ENCODE measurements at regions of chr3 and their contacts with region 1.

Region 1: DNA sequence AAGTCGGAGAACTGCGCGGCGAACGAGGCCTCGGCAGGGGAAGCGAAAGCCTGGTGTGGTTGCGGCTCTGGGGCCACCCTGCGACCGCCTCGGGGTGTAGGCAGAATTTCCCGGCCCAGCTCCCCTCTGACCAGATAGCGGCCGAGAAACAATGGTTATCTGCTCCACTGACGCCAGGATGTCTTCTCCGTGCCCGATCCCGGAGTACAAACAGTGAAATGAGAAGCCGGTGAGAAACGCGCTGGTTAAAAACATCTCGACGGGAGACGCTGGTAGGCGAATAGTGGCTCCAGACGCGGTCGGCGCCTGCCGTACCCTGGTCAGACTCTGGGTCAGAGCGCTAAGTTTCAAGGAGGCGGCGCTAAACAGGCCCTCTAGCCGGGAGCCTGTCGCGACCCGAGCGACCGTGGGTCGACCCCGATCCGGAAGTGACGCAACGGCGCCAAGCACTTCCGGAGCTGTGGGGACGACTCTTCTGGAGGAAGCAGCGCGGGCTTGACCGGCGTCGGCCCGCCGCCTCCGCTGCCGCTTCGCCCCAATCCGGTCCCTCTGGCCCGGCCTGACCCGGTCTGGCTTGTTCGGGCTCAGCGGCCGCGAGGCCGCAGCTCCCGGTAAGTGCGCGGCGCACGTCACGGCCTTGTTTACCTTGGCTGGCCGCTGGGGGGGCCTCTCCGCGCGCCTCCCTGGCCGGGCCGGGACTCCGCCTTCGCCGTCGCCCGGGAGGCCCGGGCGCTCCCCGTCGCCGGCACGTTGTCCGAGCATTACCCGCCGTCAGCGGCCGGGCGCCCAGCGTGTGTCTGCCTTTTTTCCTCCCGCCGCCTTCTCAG is at the start of gene ARIH2:
- DNase-seq: peak; percentile 95
- H3K4me3 ChIP-seq: peak within 1 kb of the TSS; percentile 63 to 94 (median 84)
- H3K27ac ChIP-seq: peak within 1 kb of the TSS; percentile 99
- H3K4me1 ChIP-seq: peaks cover 14% of the 10 kb centered on the region
- H3K27me3 ChIP-seq: no peaks in the 10 kb centered on the region
- CTCF ChIP-seq: no peak
- POLR2A ChIP-seq: peak; percentile 97
- total RNA-seq, gene ARIH2: 77.2 and 85.5 TPM in 2 replicates

Region 2: DNA sequence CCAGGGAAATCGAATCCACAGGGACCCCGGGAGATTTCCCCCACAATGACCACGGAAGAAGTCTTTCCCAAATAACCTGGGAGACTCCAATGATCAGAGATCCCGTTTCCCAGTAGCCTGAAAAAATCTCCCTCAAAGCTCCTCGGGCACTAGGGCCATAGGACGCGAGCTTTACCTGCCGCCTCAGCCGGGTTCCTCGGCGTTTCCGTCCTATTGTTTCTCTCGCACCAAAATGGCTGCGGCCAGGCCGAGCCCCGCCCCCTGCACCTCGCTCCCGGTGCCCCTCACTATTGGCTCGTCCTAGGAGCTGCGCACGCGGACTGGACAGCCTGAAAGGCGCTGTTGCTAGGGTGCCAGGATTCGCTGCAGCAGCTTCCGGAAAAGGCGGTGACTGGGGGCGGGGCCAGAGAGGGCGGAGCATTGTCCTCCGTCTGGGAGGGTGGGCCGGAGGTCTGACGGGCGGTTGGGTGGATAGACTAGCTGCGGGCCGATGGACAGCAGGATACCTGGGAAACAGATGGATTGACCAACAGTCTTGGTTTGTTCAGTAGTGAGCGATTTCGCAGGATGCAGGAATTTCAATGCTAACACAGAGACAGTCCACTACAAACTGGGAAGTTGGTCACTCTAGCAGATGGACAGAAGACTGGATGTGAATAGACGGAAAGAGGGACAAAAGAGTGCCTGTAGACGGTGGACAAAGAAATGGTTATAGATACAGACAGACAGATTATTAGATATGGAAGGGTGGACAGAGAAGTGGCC is 201.4 kb before region 1 on chr3 and contains the start of gene IP6K2:
- CTCF ChIA-PET with region 1: no interaction called
- POLR2A ChIA-PET with region 1: no interaction called
- dilution Hi-C with region 1: no loop called
- intact Hi-C with region 1: loop called (anchors 5 kb)
- DNase-seq: peak; percentile 99
- H3K4me3 ChIP-seq: peak within 1 kb of the TSS; percentile 81 to 99 (median 93)
- H3K27ac ChIP-seq: peak within 1 kb of the TSS; percentile 88
- H3K4me1 ChIP-seq: peaks cover 8% of the 10 kb centered on the region
- H3K27me3 ChIP-seq: peaks cover 5 to 8% of the 10 kb centered on the region in 2 experiments
- CTCF ChIP-seq: no peak
- POLR2A ChIP-seq: peak; percentile 97
- total RNA-seq, gene IP6K2: 72.4 and 81.8 TPM in 2 replicates

Region 3: DNA sequence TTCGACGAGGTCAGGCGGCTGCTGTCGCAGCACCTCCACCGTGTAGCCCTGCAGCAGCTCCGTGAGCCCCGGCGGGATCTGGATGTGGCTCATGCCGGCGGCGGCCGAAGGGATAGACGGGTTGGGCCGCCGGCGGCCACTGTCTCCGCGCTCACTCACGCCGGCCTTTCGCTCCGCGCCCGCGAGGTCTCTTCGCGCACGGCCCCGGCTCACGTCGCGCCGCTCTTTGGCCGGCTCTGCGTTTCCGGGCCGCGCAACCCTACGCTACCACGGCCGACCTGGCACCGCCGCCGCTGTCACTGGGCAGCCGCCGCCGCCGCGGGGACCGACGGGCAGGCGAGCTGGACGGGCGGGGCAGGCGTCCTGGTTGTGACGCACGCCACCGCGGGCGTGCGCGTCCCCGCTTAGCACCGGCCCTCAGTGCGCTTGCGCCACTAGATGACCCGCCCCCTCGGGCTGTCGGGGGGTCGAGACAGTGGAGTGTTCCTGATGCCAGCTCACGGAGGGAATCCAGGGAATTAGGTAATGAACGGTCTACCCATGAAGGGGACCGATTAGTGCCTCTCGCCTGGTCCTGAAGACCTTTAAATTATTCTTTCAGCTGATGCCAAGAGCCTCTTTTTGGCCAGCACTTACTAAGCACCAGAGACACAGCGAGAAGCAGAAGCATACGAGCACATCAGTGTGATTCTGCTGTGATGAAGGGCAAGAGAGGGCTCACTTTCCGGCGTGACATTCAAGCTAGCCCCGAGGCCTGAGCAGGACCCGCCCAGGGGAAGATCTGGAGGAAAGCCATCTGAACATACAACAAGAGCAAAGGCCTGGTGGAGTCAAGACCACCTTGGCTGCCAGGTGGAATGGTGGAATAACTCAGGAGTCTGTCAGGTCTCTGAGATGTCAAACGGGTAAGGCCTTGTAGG is 70.8 kb before region 1 on chr3 and contains the start of gene PRKAR2A:
- CTCF ChIA-PET with region 1: interaction called, 3 read pairs
- POLR2A ChIA-PET with region 1: no interaction called
- dilution Hi-C with region 1: no loop called
- intact Hi-C with region 1: loop called (anchors 1 kb)
- DNase-seq: peak; percentile 92
- H3K4me3 ChIP-seq: peak within 1 kb of the TSS; percentile 48 to 68 (median 59)
- H3K27ac ChIP-seq: peak within 1 kb of the TSS; percentile 44
- H3K4me1 ChIP-seq: peaks cover 9% of the 10 kb centered on the region
- H3K27me3 ChIP-seq: no peaks in the 10 kb centered on the region
- CTCF ChIP-seq: no peak
- POLR2A ChIP-seq: peak; percentile 69
- total RNA-seq, gene PRKAR2A: 62.8 and 69.9 TPM in 2 replicates

Region 4: DNA sequence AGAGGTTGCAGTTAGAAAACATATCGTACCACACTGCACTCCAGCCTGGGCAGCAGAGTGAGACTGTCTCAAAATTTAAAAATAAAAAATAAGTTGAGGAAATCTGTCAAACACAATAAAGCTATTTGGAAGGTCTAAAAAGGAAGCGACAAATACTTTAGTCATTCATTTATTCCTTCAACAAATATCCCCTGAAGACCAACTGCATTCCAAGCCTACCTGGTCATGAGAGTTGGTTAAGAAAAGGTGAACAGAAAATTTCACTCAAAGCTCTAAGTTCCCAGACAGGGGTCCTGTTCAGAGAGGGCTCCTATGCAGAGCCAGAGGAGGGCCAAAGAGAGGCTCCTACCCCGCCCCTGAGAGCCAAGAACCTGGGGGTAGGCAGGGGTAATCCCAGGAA is 55.5 kb before region 1 on chr3:
- CTCF ChIA-PET with region 1: no interaction called
- POLR2A ChIA-PET with region 1: no interaction called
- dilution Hi-C with region 1: no loop called
- intact Hi-C with region 1: no loop called
- DNase-seq: peak; percentile 12
- H3K4me3 ChIP-seq: no peak overlapping the region
- H3K27ac ChIP-seq: no peak overlapping the region
- H3K4me1 ChIP-seq: peaks cover 12% of the 10 kb centered on the region
- H3K27me3 ChIP-seq: no peaks in the 10 kb centered on the region
- CTCF ChIP-seq: no peak
- POLR2A ChIP-seq: no peak

Region 5: DNA sequence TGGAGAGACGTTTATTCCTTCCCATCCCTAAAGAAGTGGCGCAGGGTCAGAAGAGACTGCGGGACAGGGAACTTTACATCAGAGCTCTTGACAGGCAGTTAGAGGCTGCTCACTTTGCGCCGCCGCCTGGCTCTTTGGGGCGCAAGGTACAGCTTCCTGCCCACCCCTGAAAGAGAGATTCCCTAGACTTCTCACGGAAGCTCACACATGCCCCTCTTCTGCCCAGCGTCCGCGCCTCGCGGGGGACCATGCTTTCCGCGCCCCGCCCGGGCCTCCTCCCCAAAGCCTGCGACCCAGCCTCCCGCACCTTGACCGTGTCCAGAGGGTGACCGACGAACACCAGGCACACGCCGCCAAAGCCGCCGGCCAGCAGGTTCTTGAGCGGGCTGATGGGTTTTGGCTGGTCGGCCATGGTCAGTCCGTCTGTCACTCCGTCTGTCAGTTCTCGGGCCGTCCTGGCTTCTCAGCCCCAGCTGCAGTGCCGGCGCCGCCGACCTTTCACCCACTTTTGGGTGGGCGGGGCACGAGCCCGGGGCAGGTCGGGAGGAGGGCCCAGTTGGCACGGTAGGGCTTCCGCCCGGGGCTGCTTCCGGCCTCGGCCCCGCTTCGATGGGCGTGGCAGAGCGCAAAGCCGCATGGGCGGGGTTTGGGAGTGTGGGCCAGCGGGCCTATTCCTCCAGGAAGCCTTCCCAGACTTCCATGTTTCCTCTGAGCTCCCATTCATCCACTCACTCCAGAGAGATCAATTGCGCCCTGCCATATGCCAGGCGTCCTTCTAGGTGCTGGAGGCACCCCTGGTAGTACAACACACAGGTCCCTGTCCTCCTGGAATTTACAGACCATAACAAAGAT is 20.0 kb before region 1 on chr3 and contains the start of gene SLC25A20:
- CTCF ChIA-PET with region 1: interaction called, 3 read pairs
- POLR2A ChIA-PET with region 1: no interaction called
- dilution Hi-C with region 1: no loop called
- intact Hi-C with region 1: loop called (anchors 1 kb)
- DNase-seq: peak; percentile 80
- H3K4me3 ChIP-seq: peak within 1 kb of the TSS; percentile 33 to 50 (median 48)
- H3K27ac ChIP-seq: peak within 1 kb of the TSS; percentile 25
- H3K4me1 ChIP-seq: peaks cover 7% of the 10 kb centered on the region
- H3K27me3 ChIP-seq: no peaks in the 10 kb centered on the region
- CTCF ChIP-seq: no peak
- POLR2A ChIP-seq: peak; percentile 31
- total RNA-seq, gene SLC25A20: 7.9 and 8.4 TPM in 2 replicates

Region 6: GRCh38 chr3:48966876-48967361 is 48.3 kb after region 1 on chr3:
- CTCF ChIA-PET with region 1: no interaction called
- POLR2A ChIA-PET with region 1: no interaction called
- dilution Hi-C with region 1: no loop called
- intact Hi-C with region 1: no loop called
- DNase-seq: no peak
- H3K4me3 ChIP-seq: no peak overlapping the region
- H3K27ac ChIP-seq: no peak overlapping the region
- H3K4me1 ChIP-seq: no peaks in the 10 kb centered on the region
- H3K27me3 ChIP-seq: no peaks in the 10 kb centered on the region
- CTCF ChIP-seq: no peak
- POLR2A ChIP-seq: no peak

Region 7: DNA sequence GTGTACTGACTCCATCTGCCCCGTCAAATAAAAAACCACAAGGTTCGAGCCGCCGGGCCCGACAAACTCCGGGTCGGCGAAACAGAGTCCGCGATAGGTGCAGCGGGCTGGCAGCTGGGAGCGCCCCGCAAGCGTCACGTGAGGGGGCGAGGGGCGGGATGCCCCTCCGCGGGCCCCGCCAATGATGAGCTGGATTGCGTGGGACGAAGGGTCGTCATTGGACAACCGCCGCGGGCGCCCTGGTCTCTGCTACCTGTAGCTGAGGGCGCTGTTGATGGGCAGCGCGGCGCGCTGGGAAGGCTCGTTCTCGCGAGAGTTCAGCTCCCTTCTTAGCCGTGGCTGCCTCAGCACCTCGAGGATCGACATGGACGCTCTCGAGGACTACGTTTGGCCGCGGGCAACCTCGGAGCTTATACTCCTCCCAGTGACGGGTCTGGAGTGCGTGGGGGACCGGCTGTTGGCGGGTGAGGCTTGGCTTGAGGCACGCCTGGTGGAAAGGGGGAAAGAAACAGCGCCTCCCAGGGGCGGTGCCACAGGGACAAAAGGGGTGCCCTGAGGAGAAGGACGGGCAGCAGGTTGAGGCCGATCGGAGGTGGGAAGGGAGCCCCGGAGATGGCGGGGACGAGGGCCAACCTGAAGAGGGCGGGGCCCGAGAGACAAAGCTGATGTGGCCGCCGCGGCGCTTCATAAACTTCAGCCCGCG is 88.6 kb after region 1 on chr3 and contains the start of gene WDR6:
- CTCF ChIA-PET with region 1: no interaction called
- POLR2A ChIA-PET with region 1: no interaction called
- dilution Hi-C with region 1: no loop called
- intact Hi-C with region 1: no loop called
- DNase-seq: peak; percentile 98
- H3K4me3 ChIP-seq: peak within 1 kb of the TSS; percentile 39 to 93 (median 46)
- H3K27ac ChIP-seq: peak within 1 kb of the TSS; percentile 57
- H3K4me1 ChIP-seq: peaks cover 15% of the 10 kb centered on the region
- H3K27me3 ChIP-seq: no peaks in the 10 kb centered on the region
- CTCF ChIP-seq: peak; percentile 22 to 30
- POLR2A ChIP-seq: peak; percentile 89
- total RNA-seq, gene WDR6: 161 and 192 TPM in 2 replicates

Region 8: DNA sequence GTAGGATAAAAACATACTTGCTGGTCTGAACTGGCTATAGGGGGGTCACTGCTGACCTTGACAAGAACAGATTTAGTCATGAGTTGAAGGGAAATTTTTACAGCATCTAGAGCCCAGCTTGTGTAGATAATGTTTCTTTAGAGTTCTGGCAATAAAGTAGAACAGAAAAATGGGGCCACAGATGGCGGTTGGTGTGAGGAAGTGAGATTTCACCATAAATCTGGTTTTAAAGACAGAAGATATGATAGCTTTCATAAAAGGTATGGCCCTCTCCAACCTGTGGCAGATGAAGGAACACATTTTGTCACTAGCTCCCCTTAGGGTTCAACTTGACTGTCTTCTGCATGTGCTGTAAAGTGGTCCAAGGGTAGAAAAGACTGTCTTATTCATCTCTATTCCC is 134.9 kb after region 1 on chr3:
- CTCF ChIA-PET with region 1: no interaction called
- POLR2A ChIA-PET with region 1: no interaction called
- dilution Hi-C with region 1: no loop called
- intact Hi-C with region 1: no loop called
- DNase-seq: no peak
- H3K4me3 ChIP-seq: no peak overlapping the region
- H3K27ac ChIP-seq: no peak overlapping the region
- H3K4me1 ChIP-seq: no peaks in the 10 kb centered on the region
- H3K27me3 ChIP-seq: no peaks in the 10 kb centered on the region
- CTCF ChIP-seq: no peak
- POLR2A ChIP-seq: no peak